HEK293 (cell line): ENCODE measurements at regions of chr10 and their contacts with region 1.

Region 1: DNA sequence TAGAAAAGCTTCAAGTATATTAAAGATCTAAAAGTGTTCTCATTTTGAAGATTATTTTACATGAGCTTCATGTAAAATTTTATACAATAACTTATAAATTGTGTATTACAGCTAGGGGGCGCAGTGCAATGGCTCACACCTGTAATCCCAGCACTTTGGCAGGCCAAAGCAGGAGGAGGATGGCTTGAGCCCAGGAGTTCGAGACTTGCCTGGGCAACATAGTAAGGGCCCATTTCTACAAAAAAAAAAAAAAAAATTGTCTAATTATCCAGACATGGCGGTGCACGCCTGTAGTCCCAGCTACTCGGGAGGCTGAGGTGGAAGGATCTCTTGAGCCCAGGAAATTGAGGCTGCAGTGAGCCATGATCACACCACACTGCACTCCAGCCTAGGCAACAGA is 16.6 kb downstream of the ACBD5 start:
- H3K4me3 ChIP-seq: no peak overlapping the region
- H3K27ac ChIP-seq: no peak overlapping the region
- H3K4me1 ChIP-seq: no peaks in the 10 kb centered on the region
- CTCF ChIP-seq: no peak

Region 2: GRCh38 chr10:27235706-27236105 is 11.7 kb after region 1 on chr10:
- CTCF ChIA-PET with region 1: interaction called, 22 read pairs
- POLR2A ChIA-PET with region 1: no interaction called
- H3K4me3 ChIP-seq: no peak overlapping the region
- H3K27ac ChIP-seq: no peak overlapping the region
- H3K4me1 ChIP-seq: peaks cover 2% of the 10 kb centered on the region; the same call in 1 of the 2 replicates
- CTCF ChIP-seq: no peak

Region 3: DNA sequence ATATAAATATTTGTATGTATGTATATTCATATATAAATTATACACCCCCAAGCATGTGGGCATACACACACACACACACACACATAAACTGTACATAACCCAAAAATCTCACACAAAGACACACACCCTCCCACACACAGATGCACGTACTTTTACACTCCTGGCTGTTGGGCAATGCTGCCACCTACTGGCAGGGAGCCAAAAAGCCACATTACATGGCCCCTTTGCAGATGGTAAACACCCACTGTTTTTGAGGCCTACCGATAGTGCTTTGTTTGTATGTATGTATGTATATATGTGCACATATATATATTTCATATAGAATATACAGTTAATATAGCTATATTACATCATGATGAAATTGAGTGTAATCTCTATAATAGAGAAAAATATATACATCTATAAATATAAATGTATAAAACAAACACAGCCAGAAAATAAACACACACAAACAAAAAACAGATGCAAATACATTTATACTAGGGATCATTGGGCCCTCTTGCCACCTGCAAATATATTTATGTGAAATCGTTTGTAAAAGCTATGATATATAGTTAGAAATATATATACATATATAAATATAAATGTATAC is 136.7 kb after region 1 on chr10:
- CTCF ChIA-PET with region 1: interaction called, 21 read pairs
- POLR2A ChIA-PET with region 1: no interaction called
- H3K4me3 ChIP-seq: no peak overlapping the region
- H3K27ac ChIP-seq: no peak overlapping the region
- H3K4me1 ChIP-seq: no peaks in the 10 kb centered on the region
- CTCF ChIP-seq: peak; percentile 84